A673 (cell line): ENCODE measurements at regions of chr1 and their contacts with region 1.

Region 1: GRCh38 chr1:204506961-204507387 is 9.2 kb upstream of the MDM4 start:
- DNase-seq: peak; percentile 95
- H3K4me3 ChIP-seq: peak overlapping the region; percentile 59
- H3K27ac ChIP-seq: peak overlapping the region; percentile 97
- H3K4me1 ChIP-seq: peaks cover 24% of the 10 kb centered on the region
- H3K27me3 ChIP-seq: peaks cover 4% of the 10 kb centered on the region
- CTCF ChIP-seq: no peak

Region 2: DNA sequence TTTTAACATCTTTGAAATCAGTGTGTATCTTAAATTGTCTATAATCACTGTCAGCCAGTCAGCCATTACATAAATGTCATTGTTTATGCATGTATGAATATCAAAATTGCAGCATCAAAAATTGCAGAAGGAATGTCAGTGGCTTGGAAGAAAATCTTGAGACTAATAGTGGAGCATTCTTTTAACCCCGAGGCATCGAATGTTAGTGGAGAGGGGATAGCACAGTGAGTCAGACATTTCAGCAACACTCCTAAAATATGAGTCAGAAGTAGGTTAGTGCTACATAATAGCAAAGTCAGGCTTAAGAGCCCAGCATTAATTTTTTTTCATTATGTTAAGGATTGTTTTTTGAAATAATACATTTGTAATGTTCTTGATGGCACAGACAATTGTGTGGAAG is 600.0 kb before region 1 on chr1:
- CTCF ChIA-PET with region 1: no interaction called
- POLR2A ChIA-PET with region 1: no interaction called
- intact Hi-C with region 1: no loop called
- DNase-seq: peak; percentile 45
- H3K4me3 ChIP-seq: no peak overlapping the region
- H3K27ac ChIP-seq: no peak overlapping the region
- H3K4me1 ChIP-seq: no peaks in the 10 kb centered on the region
- H3K27me3 ChIP-seq: no peaks in the 10 kb centered on the region
- CTCF ChIP-seq: no peak

Region 3: DNA sequence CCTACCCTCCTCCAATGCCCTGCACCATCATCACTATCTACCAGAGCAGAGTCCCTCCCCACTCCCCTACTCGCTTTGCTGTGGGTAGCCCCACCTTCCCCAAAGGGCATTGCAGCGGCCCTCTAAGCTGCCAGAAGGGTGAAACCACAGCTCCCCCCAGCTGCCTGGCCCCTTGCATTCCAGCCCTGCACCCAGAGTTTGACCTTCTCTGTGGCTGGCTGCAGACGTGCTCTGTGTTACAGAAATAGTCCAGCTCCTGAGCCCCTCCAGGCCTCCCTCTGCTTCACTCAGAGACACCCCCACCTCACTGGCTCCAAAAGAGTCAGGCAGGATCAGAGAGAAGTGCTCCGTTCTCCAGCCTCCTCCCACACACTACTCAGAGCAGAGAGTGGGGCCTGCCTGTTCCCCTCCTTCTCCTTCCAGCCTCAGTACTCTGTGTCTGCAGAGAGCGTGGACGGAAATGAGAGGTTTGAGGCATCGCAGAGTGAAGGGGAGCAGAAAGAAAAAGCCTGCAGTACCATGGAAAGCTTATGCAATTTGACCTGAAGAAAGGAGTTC is 210.5 kb before region 1 on chr1:
- CTCF ChIA-PET with region 1: no interaction called
- POLR2A ChIA-PET with region 1: no interaction called
- intact Hi-C with region 1: no loop called
- DNase-seq: no peak
- H3K4me3 ChIP-seq: no peak overlapping the region
- H3K27ac ChIP-seq: no peak overlapping the region
- H3K4me1 ChIP-seq: no peaks in the 10 kb centered on the region
- H3K27me3 ChIP-seq: peaks cover 13% of the 10 kb centered on the region
- CTCF ChIP-seq: no peak

Region 4: GRCh38 chr1:204431310-204432165 is 75.4 kb before region 1 on chr1:
- CTCF ChIA-PET with region 1: interaction called, 21 read pairs
- POLR2A ChIA-PET with region 1: no interaction called
- intact Hi-C with region 1: loop called (anchors 1 kb)
- DNase-seq: peak; percentile 79
- H3K4me3 ChIP-seq: no peak overlapping the region
- H3K27ac ChIP-seq: no peak overlapping the region
- H3K4me1 ChIP-seq: peaks cover 21% of the 10 kb centered on the region
- H3K27me3 ChIP-seq: no peaks in the 10 kb centered on the region
- CTCF ChIP-seq: peak; percentile 97

Region 5: GRCh38 chr1:204446370-204447111 is 60.4 kb before region 1 on chr1:
- CTCF ChIA-PET with region 1: interaction called, 71 read pairs
- POLR2A ChIA-PET with region 1: interaction called, 3 read pairs
- intact Hi-C with region 1: loop called (anchors 1 kb)
- DNase-seq: peak; percentile 87
- H3K4me3 ChIP-seq: no peak overlapping the region
- H3K27ac ChIP-seq: no peak overlapping the region
- H3K4me1 ChIP-seq: peaks cover 20% of the 10 kb centered on the region
- H3K27me3 ChIP-seq: no peaks in the 10 kb centered on the region
- CTCF ChIP-seq: peak; percentile 70

Region 6: GRCh38 chr1:204480515-204480914 is 26.5 kb before region 1 on chr1:
- CTCF ChIA-PET with region 1: no interaction called
- POLR2A ChIA-PET with region 1: interaction called, 12 read pairs
- intact Hi-C with region 1: no loop called
- DNase-seq: no peak
- H3K4me3 ChIP-seq: no peak overlapping the region
- H3K27ac ChIP-seq: no peak overlapping the region
- H3K4me1 ChIP-seq: peaks cover 28% of the 10 kb centered on the region
- H3K27me3 ChIP-seq: no peaks in the 10 kb centered on the region
- CTCF ChIP-seq: no peak